ENCODE measurements at regions of chr11 and their contacts with region 1.

Region 1: GRCh38 chr11:100930185-100930778 is 199.3 kb downstream of the PGR start:
- DNase-seq: no peak
- H3K4me3 Mint-ChIP-seq: no peak overlapping the region
- H3K27ac Mint-ChIP-seq: no peak overlapping the region
- H3K4me1 Mint-ChIP-seq: no peaks in the 10 kb centered on the region
- H3K27me3 Mint-ChIP-seq: no peaks in the 10 kb centered on the region

Region 2: GRCh38 chr11:99020352-99021225 is 1909.7 kb before region 1 on chr11 and contains the start of gene CNTN5:
- CTCF ChIA-PET with region 1: no interaction called
- intact Hi-C with region 1: loop called (anchors 5 kb)
- DNase-seq: peak; percentile 23
- H3K4me3 Mint-ChIP-seq: peak within 1 kb of the TSS; percentile 61
- H3K27ac Mint-ChIP-seq: no peak within 1 kb of the TSS
- H3K4me1 Mint-ChIP-seq: peaks cover 9% of the 10 kb centered on the region
- H3K27me3 Mint-ChIP-seq: peaks cover 39% of the 10 kb centered on the region
- total RNA-seq, gene CNTN5: not detected

Region 3: DNA sequence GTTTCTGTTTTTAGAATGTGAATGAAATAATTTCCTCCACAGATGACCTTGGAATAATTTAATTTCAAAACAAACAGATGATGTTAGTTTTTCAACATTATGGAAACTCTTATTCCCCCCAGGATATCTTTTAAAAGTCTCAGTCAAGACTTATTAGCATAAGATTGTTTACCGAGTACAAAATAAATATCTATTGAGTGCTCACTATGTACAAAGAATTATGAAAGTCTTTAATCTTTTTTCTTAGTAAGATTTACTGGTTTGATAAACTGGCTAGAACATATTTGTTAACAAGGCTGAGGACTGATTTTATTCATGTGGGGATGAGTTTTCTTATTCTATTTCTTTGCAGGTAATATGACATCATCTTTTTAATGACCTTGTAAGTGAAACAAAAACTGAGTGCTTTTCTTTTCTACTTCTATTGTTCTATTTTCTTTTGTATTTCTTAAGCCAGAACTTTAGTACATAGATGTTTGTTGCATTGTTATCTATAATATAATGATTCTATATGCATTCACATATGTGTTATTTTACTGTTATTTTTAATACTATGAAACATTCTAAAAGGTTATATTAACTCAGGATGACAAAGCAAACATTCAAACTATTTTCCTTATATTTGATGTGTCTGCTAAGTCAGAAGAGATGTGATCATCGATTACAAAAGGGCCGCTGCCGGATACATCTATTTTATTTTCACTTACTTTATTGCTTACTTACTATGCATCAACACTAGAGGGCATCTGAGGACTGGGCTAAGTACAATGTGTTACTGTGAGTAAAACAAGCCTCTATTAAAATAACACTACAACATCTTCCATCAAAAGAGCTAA is 354.2 kb before region 1 on chr11:
- CTCF ChIA-PET with region 1: interaction called, 4 read pairs
- intact Hi-C with region 1: loop called (anchors 1 kb)
- DNase-seq: peak; percentile 12
- H3K4me3 Mint-ChIP-seq: no peak overlapping the region
- H3K27ac Mint-ChIP-seq: no peak overlapping the region
- H3K4me1 Mint-ChIP-seq: no peaks in the 10 kb centered on the region
- H3K27me3 Mint-ChIP-seq: no peaks in the 10 kb centered on the region

Region 4: GRCh38 chr11:100682247-100682969 is 247.9 kb before region 1 on chr11:
- CTCF ChIA-PET with region 1: no interaction called
- intact Hi-C with region 1: loop called (anchors 2 kb)
- DNase-seq: no peak
- H3K4me3 Mint-ChIP-seq: no peak overlapping the region
- H3K27ac Mint-ChIP-seq: no peak overlapping the region
- H3K4me1 Mint-ChIP-seq: peaks cover 6% of the 10 kb centered on the region
- H3K27me3 Mint-ChIP-seq: peaks cover 17% of the 10 kb centered on the region

Region 5: GRCh38 chr11:100695911-100696310 is 234.4 kb before region 1 on chr11:
- CTCF ChIA-PET with region 1: no interaction called
- intact Hi-C with region 1: no loop called
- DNase-seq: no peak
- H3K4me3 Mint-ChIP-seq: no peak overlapping the region
- H3K27ac Mint-ChIP-seq: no peak overlapping the region
- H3K4me1 Mint-ChIP-seq: no peaks in the 10 kb centered on the region
- H3K27me3 Mint-ChIP-seq: no peaks in the 10 kb centered on the region